GM13977 (cell line): ENCODE measurements at regions of chr2 and their contacts with region 1.

Region 1: GRCh38 chr2:28594289-28595108 is 98.6 kb downstream of the PLB1 start:
- DNase-seq: peak; percentile 79
- CTCF ChIP-seq: peak; percentile 83

Region 2: DNA sequence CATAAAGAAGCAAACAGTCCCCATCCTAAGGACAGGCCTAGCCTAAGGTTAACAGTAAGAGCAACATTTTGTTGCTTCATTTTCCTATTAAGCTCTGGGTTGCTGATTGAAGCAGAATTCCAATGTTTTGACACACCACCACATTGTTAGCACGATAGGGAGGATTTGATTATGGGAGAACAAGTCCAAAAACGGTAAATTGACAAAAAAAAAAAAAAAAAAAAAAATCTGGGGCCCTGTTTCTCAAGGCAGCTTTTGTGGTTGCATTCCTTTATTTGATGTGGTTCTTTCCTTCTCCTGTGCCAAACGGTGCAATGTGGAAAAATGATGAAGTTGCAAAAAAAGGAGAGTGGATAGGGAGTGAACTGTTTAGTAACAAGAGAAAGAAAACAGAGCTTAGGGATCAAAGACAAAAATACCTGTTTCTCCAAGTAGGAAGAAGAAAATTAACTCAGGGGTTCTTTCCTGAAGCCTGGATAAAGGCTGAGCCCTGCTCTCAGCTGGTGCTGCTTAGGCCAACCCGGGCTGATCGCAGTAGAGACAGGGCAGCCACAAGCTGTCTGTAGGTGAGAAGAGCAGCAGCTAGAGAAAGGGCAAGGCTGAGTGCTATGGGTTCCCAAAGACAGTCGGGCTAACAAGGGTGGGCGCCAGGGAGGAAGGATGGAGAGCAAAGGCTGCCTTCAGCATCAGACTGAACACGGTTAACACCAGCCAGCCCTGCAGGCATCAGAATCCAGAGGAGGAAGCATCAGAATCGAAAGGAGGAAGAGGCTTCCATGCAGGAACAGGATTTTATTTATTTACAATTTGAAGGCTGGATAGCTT is 369.6 kb before region 1 on chr2:
- in situ Hi-C with region 1: no loop called
- DNase-seq: no peak
- CTCF ChIP-seq: no peak

Region 3: GRCh38 chr2:28488858-28489575 is 105.5 kb before region 1 on chr2:
- in situ Hi-C with region 1: no loop called
- DNase-seq: no peak
- CTCF ChIP-seq: no peak

Region 4: DNA sequence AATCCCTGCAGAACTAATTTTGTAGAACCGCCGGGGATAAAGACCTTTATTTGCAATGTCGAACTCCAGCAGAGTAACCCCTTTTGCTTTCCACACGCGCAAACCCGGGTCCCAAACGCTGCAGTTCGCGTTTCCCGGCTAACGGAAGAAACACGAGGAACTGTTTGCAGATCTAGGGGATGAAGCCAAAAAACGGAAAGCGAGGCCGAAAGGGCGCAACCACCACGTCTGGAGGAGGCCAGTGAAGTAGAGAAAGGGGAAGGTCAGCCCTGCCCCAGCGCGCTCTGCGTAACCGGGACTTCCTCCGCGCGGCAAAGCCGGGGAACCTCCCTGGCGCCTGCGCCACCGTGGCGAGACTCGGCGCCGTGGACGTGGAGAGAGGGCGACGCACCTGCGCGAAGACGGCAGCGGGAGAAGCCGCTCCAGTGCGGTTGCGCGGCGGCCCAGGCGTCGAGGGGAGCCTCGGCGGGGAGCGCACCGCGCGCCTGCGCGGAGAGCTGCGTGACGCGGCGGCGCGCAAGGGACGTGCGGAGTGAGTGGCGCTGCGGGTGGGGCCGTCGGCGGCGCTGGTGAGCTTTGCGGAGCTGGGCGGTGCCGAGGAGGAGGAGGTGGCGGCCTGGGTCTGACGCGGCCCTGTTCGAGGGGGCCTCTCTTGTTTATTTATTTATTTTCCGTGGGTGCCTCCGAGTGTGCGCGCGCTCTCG is 156.9 kb after region 1 on chr2 and contains the start of gene PPP1CB:
- in situ Hi-C with region 1: loop called (anchors 10 kb)
- DNase-seq: peak; percentile 94
- CTCF ChIP-seq: peak; percentile 50

Region 5: DNA sequence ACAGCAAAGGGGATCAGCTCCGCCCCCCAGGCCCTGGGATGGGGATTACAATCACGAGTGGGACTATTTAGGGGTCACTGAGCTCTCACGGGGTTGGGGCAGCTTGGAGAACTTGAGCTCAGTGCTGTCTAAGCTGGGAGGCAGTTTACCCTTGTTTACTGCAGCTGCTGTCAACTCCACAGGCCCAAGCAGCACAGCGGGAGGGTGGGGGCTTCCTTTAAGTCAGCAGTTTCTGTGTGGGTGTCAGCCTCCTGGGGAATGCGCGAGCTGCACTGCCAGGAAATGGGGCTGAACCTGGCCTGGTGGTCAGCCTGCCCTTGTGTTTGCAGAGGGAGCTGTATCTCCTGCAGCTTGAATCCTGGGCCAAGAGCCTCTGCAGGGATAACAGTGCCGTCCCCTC is 416.4 kb after region 1 on chr2:
- in situ Hi-C with region 1: no loop called
- DNase-seq: no peak
- CTCF ChIP-seq: no peak